Activated CD4-positive, alpha-beta T cell treated with anti-CD3 and anti-CD28 coated beads, Interleukin-2, amount 10 ng/mL, durations not matched to agents 24 days and 14 days (primary cell): ENCODE measurements at regions of chr16 and their contacts with region 1.

Region 1: DNA sequence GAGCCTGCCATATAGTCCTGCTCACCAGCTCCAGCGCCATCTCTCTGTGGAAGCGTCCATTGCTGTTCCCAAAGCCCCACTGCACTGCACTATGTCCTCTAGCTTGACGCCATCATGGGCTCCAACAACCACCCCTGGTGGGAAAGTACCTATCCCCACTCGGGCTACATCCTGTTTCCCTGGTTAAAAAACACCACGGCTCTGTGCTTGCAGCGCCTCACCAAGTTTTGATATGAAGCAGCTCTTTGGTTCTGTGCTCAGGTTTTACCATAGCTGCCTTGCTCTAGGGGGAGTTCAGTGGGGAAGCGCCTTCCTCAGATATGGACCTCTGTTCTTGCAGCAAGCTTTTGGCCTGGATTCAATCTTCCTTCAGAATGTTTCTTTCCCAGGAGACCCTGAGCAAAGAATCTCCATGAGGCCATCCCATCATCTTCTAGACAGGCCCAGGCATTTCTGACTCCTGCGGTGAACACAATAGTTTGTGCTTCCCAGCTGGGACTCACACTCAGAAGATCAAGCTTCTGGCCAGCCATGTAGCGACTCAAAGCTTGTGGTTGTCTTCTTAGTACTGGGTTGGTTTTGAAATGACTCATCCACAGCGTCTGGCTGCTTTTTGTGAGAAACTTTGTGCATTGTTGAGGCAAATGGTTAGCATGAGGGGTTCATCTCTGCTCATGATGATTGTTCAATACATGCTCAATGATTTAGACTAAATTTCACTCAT is 39.5 kb downstream of the DYNLRB2 start:
- DNase-seq: peak; percentile 94
- H3K4me3 Mint-ChIP-seq: peak overlapping the region; percentile 80
- H3K27ac Mint-ChIP-seq: peak overlapping the region; percentile 96
- H3K4me1 Mint-ChIP-seq: peaks cover 58% of the 10 kb centered on the region
- H3K27me3 Mint-ChIP-seq: no peaks in the 10 kb centered on the region

Region 2: DNA sequence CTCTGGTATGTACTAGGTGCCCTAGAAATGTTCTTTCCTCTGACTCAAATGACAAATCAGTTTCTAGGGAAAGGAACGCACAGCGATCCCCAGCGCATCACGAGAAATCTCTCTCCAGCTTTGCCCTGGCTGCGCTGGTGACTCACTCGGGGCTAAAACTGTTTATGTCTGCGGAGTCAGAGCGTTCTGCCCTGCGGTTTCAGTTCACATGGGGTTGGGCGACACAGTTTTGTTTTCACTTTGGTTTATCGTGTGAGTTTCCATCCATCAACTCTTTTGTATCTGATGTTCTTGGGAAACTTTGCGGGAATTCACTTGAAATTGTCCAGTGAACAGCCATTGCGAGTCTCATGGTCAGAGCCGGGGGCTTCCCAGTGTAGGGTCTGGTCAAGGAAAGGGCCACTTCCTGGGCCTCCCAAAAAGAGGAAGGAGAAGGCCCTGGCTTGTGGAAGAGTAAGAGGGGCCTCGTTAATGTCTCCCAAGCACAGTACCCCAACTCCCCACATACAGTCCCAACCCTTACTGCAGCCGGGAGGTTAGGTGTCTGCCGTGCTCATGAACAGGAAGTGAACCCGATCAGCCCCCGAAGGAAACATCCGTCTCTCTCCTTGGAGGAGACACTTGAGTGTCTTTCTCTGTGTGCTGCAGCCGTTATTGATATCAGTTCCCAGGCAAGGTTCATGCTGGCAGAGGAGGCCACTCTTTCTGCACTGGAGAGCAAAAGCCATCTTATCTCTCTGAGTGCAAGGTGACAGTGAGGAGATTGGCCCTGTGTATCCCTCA is 1837.6 kb before region 1 on chr16:
- intact Hi-C with region 1: loop called (anchors 5 kb)
- DNase-seq: peak; percentile 91
- H3K4me3 Mint-ChIP-seq: peak overlapping the region; percentile 66
- H3K27ac Mint-ChIP-seq: peak overlapping the region; percentile 87
- H3K4me1 Mint-ChIP-seq: peaks cover 18% of the 10 kb centered on the region
- H3K27me3 Mint-ChIP-seq: no peaks in the 10 kb centered on the region

Region 3: GRCh38 chr16:79613009-79613408 is 967.3 kb before region 1 on chr16:
- intact Hi-C with region 1: loop called (anchors 10 kb)
- DNase-seq: no peak
- H3K4me3 Mint-ChIP-seq: no peak overlapping the region
- H3K27ac Mint-ChIP-seq: no peak overlapping the region
- H3K4me1 Mint-ChIP-seq: peaks cover 41% of the 10 kb centered on the region
- H3K27me3 Mint-ChIP-seq: peaks cover 15% of the 10 kb centered on the region

Region 4: GRCh38 chr16:80317599-80318037 is 262.7 kb before region 1 on chr16:
- intact Hi-C with region 1: no loop called
- DNase-seq: no peak
- H3K4me3 Mint-ChIP-seq: no peak overlapping the region
- H3K27ac Mint-ChIP-seq: no peak overlapping the region
- H3K4me1 Mint-ChIP-seq: no peaks in the 10 kb centered on the region
- H3K27me3 Mint-ChIP-seq: peaks cover 5% of the 10 kb centered on the region

Region 5: DNA sequence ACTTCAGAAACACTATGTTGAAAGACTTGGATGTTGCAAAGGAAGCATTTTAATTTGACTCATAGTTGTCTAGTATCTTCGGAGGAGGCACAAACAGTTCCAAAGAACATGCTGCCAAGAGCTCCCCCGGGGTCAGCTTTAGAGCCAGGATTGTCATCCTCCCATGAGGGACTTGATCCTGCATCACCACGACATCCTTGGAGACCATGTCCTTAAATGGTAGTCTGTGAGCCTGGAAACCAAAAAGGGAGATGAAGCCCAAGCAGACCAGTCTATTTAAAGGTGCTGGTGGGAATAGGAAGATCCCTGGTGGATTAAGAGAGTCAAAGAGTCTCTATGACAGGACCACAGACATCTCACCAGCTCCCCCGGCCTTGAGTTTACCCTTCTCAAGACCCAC is 72.7 kb before region 1 on chr16:
- intact Hi-C with region 1: no loop called
- DNase-seq: no peak
- H3K4me3 Mint-ChIP-seq: no peak overlapping the region
- H3K27ac Mint-ChIP-seq: no peak overlapping the region
- H3K4me1 Mint-ChIP-seq: no peaks in the 10 kb centered on the region
- H3K27me3 Mint-ChIP-seq: peaks cover 18% of the 10 kb centered on the region

Region 6: GRCh38 chr16:80569440-80570105 is 10.7 kb before region 1 on chr16:
- intact Hi-C with region 1: loop called (anchors 1 kb)
- DNase-seq: peak; percentile 89
- H3K4me3 Mint-ChIP-seq: peak overlapping the region; percentile 43
- H3K27ac Mint-ChIP-seq: peak overlapping the region; percentile 81
- H3K4me1 Mint-ChIP-seq: peaks cover 45% of the 10 kb centered on the region
- H3K27me3 Mint-ChIP-seq: no peaks in the 10 kb centered on the region

Region 7: DNA sequence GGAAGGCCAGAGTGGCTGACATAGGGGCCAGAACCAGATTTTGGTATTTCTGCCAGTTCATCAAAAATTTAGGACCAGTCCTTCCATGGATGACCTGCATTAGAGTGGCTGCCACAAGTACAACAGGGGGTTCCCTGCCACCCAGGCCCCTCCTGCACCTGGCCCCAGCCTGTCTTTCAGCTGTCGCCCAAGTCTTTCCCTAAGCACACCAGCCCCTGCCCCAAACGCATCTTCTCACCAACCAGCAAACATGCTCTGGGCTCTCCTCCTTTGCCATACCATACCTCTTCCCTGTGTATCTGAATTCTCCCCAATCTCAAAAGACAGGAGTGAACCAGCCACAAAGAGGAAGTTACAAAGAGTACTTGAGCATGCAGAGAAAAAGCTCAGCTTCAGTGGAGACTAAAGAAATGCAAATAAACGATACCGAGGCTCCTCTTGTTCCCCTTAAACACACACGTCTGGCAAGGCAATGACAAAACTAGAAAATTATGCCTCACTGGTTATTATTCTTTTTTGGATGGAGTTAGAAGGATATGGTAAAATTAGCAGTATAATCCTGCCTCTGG is 91.1 kb after region 1 on chr16:
- intact Hi-C with region 1: loop called (anchors 5 kb)
- DNase-seq: peak; percentile 47
- H3K4me3 Mint-ChIP-seq: no peak overlapping the region
- H3K27ac Mint-ChIP-seq: no peak overlapping the region
- H3K4me1 Mint-ChIP-seq: peaks cover 29% of the 10 kb centered on the region
- H3K27me3 Mint-ChIP-seq: no peaks in the 10 kb centered on the region

Region 8: GRCh38 chr16:81006814-81007696 is 426.8 kb after region 1 on chr16 and contains the starts of genes CENPN and CMC2:
- intact Hi-C with region 1: loop called (anchors 5 kb)
- DNase-seq: peak; percentile 99
- H3K4me3 Mint-ChIP-seq: peak within 1 kb of the TSS; percentile 98
- H3K27ac Mint-ChIP-seq: peak within 1 kb of the TSS; percentile 100
- H3K4me1 Mint-ChIP-seq: peaks cover 53% of the 10 kb centered on the region
- H3K27me3 Mint-ChIP-seq: no peaks in the 10 kb centered on the region
- total RNA-seq, gene CENPN: 61.8 and 63.3 TPM in 2 replicates
- total RNA-seq, gene CMC2: 130 and 137 TPM in 2 replicates